ENCODE measurements at regions of chr5 and their contacts with region 1.

Region 1: GRCh38 chr5:8247049-8247899 is 378.3 kb downstream of the MTRR start:
- DNase-seq: no peak
- ATAC-seq: no peak
- H3K4me3 ChIP-seq: no peak overlapping the region
- H3K4me3 Mint-ChIP-seq: no peak overlapping the region
- H3K27ac ChIP-seq: no peak overlapping the region
- H3K27ac Mint-ChIP-seq: no peak overlapping the region
- H3K4me1 ChIP-seq: no peaks in the 10 kb centered on the region
- H3K4me1 Mint-ChIP-seq: no peaks in the 10 kb centered on the region
- H3K27me3 ChIP-seq: no peaks in the 10 kb centered on the region
- H3K27me3 Mint-ChIP-seq: no peaks in the 10 kb centered on the region
- CTCF ChIP-seq: no peak

Region 2: DNA sequence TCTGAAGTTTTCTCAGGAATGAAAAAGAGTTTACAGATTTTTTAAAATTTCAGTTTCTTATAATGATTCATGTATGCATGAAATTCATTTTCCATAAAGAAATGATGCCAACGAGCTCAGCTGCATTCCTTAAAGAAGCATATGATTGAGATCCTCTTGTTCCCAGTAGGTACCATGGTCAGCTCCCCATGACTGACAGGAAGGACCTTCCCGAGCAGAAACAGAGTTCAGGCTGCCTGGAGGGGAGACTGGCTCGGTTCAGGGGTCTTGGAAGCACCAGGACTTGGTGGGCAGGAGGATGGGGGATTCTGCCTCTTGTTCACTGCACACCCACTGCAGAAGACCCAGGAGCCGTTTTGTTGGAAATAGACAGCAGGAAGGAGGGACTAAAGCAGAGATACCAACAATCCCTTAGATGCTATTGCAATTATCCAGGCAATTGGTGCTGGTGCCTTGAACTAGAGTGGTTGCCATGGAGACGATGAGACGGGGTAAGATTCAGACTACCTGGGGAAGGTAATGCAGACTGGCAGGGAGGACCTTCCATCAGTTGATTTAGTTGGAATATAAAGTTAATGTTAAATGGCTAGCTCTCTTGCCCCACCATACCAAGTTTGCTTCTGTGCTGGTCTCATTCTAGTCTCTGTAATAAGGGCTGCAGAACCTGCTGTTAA is 69.5 kb after region 1 on chr5:
- CTCF ChIA-PET with region 1: no interaction called
- POLR2A ChIA-PET with region 1: no interaction called
- intact Hi-C with region 1: loop called in 1 of 2 experiments (anchors 2 kb)
- DNase-seq: no peak
- ATAC-seq: no peak
- H3K4me3 ChIP-seq: no peak overlapping the region
- H3K4me3 Mint-ChIP-seq: no peak overlapping the region
- H3K27ac ChIP-seq: no peak overlapping the region
- H3K27ac Mint-ChIP-seq: no peak overlapping the region
- H3K4me1 ChIP-seq: no peaks in the 10 kb centered on the region
- H3K4me1 Mint-ChIP-seq: no peaks in the 10 kb centered on the region
- H3K27me3 ChIP-seq: no peaks in the 10 kb centered on the region
- H3K27me3 Mint-ChIP-seq: no peaks in the 10 kb centered on the region
- CTCF ChIP-seq: no peak

Measured in CD8-positive, alpha-beta T cell (primary cell).